Head of caudate nucleus (tissue), 42 donors: ENCODE measurements at regions of chr4 and their contacts with region 1.

Region 1: DNA sequence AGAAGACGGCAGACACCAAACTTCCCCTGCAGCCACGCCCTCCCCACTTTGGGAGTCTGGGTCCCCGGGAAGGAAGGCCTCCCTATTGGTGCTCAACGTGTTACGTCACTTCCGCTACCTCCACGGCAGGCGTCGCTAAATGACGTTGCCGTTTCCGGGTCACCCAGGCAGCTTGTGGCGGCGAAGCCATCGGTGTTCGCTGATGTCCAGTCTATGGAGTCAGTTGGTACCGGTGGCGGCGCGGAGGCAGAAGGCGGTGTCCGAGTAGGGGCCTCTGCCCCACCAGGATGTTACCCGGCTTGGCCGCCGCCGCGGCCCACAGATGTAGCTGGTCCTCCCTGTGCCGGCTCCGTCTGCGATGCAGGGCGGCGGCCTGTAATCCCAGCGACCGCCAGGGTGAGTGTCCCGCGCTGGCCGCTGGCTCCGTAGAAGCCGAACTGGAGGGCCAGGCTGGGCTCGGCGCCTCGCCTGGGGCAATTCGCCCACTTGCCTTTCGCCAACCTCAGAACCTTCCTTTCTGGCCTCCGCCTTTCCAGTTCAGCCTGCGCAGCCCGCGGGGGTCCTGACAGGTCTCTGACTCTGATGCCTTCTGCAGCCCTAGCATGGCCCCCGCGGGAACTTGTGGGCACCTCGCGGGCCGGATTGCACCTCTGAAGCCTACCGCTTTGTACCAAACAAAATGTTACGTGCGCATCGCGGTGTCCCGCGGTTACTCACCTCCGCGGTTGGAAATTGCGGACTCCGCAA is at the start of gene SLC30A9:
- DNase-seq: peak; percentile 96 to 99 (median 98)

Region 2: GRCh38 chr4:41934815-41935651 is 55.5 kb before region 1 on chr4 and contains the start of gene TMEM33:
- intact Hi-C with region 1: loop called (anchors 5 kb)
- DNase-seq: peak; percentile 84 to 97 (median 92)